Left colon (tissue), 2 donors: ENCODE measurements at regions of chr16 and their contacts with region 1.

Region 1: DNA sequence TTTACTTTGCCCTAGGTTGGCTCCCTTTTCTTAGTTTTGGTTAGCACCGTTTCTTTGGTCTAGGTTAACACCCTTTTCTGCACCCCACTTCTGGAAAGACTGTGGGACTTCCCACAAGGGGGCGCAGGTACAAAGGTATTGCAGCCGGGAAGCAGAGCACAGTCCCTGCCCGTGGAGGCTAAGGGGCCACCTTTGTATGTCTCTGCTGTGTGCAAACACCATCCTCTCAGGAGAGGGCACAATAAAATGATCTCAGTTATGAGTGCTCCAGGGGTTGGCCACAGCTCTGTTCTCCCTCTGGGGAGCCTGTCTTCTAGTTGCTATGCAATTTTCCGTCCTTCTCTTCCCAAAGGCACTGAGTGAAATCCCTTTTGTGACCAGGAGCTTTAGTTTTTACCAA is 28.4 kb upstream of the TMC5 start:
- DNase-seq: peak; percentile 82 to 90
- ATAC-seq: peak; percentile 79

Region 2: GRCh38 chr16:19502395-19503131 is 113.3 kb after region 1 on chr16:
- intact Hi-C with region 1: loop called in 1 of 2 experiments (anchors 10 kb)
- DNase-seq: peak; percentile 68 to 82
- ATAC-seq: peak; percentile 75

Region 3: DNA sequence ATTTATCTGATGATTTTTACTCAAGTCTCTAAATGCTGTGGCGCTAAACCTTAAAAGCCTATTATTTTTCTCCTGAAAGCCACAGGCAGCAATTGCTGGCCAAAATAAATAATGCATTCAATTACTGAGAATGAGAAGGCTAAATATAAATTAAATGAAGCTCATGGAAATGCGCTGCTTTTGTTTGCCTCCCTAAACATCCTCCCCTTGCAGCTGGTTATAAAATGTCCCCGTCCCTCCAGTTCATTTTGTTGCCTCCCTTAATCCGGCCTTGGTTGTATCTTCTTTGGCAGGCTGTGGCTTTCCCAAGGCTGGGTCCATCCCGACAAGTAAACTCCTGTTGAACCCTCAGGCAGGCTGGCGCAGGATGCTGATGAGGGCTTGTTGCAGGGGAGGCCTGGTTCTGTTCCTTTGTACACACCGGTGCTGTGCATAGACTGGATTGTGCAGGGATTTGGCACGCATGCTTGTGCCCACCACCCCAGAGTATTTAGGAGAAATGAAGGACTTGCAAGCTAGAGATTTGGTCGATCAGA is 266.1 kb after region 1 on chr16:
- intact Hi-C with region 1: no loop called
- DNase-seq: no peak
- ATAC-seq: no peak